AG04450 (cell line): ENCODE measurements at regions of chr1 and their contacts with region 1.

Region 1: GRCh38 chr1:207885129-207886032 is 25.5 kb downstream of the CD34 start:
- DNase-seq: peak; percentile 76
- H3K4me3 ChIP-seq: no peak overlapping the region
- H3K27ac ChIP-seq: no peak overlapping the region
- H3K27me3 ChIP-seq: peaks cover 3% of the 10 kb centered on the region
- CTCF ChIP-seq: peak; percentile 98

Region 2: DNA sequence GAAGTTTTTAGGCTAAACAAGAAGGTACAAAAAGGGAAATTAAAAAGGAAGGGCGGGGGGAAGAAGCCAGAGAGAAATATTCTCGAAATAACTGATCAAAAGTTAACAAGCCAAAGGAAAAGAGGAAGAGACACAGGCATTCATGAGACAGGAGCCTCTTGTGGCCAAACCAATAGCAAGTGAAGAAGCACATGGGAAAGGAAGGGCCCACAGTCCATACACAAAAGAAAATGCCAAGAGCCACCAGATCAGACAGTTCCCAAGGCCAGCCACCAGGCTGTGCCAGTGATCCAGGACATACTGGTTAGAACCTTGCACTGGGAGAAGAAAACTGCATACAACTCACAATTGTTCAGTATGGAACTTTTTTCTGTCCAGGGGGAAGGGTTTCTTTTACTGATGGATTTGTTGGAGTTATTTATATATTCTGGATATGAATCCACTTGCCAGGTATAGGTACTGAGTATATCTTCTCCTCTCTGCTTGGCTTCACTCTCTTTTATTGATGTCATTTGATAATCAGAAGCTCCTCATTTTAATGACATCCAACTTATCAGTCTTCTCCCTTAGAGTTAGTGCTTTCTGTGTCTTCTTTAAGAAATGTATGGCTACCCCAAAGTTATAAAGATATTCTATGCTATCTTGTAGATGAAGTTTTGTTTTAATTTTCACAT is 56.8 kb before region 1 on chr1:
- CTCF ChIA-PET with region 1: interaction called, 24 read pairs
- POLR2A ChIA-PET with region 1: no interaction called
- DNase-seq: peak; percentile 64
- H3K4me3 ChIP-seq: no peak overlapping the region
- H3K27ac ChIP-seq: no peak overlapping the region
- H3K27me3 ChIP-seq: no peaks in the 10 kb centered on the region
- CTCF ChIP-seq: peak; percentile 84

Region 3: GRCh38 chr1:207868774-207869721 is 16.3 kb before region 1 on chr1:
- CTCF ChIA-PET with region 1: interaction called, 247 read pairs
- POLR2A ChIA-PET with region 1: no interaction called
- DNase-seq: no peak
- H3K4me3 ChIP-seq: peak overlapping the region; percentile 71
- H3K27ac ChIP-seq: no peak overlapping the region
- H3K27me3 ChIP-seq: no peaks in the 10 kb centered on the region
- CTCF ChIP-seq: peak; percentile 65

Region 4: GRCh38 chr1:207935166-207935583 is 49.8 kb after region 1 on chr1:
- CTCF ChIA-PET with region 1: interaction called, 12 read pairs
- POLR2A ChIA-PET with region 1: no interaction called
- DNase-seq: no peak
- H3K4me3 ChIP-seq: no peak overlapping the region
- H3K27ac ChIP-seq: no peak overlapping the region
- H3K27me3 ChIP-seq: peaks cover 2% of the 10 kb centered on the region
- CTCF ChIP-seq: no peak

Region 5: GRCh38 chr1:207997486-207998268 is 112.3 kb after region 1 on chr1:
- CTCF ChIA-PET with region 1: interaction called, 96 read pairs
- POLR2A ChIA-PET with region 1: interaction called, 3 read pairs
- DNase-seq: peak; percentile 27
- H3K4me3 ChIP-seq: no peak overlapping the region
- H3K27ac ChIP-seq: no peak overlapping the region
- H3K27me3 ChIP-seq: peaks cover 10% of the 10 kb centered on the region
- CTCF ChIP-seq: peak; percentile 83

Region 6: DNA sequence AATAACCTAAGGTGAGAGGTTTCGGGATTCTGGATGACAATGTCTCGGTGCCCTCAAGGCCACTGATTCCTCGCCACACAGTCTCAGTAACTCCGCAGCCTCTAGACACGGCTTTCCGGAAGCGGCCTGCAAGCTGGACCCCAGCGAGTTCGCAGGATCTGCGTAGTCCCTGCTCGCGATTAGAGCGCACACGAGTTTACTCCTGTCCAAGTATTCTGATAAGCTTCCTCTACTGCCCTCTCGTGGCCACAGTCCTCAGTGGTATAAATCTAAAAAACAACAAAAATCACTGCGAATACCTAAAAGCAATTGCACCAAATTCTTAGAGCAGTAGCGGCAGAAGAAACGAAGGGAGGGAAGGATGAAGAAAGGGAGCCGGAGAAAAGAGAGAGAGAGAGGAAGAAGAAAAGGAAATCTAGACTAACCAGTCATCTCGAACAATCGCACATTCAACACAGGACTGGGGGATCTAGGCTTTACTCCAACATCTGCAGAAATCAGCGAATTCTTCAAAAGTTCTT is 359.9 kb after region 1 on chr1:
- CTCF ChIA-PET with region 1: interaction called, 15 read pairs
- POLR2A ChIA-PET with region 1: no interaction called
- DNase-seq: peak; percentile 78
- H3K4me3 ChIP-seq: 0 out of 2 replicates have a peak overlapping the region, but pooled peaks have one; percentile 20
- H3K27ac ChIP-seq: peak overlapping the region; percentile 21
- H3K27me3 ChIP-seq: peaks cover 30% of the 10 kb centered on the region
- CTCF ChIP-seq: peak; percentile 77